ENCODE measurements at regions of chr1 and their contacts with region 1.

Region 1: GRCh38 chr1:212608209-212608955 is at the start of gene ATF3:
- DNase-seq: peak; percentile 99
- H3K4me3 Mint-ChIP-seq: peak within 1 kb of the TSS; percentile 82
- H3K27ac Mint-ChIP-seq: peak within 1 kb of the TSS; percentile 95
- H3K4me1 Mint-ChIP-seq: peaks cover 36% of the 10 kb centered on the region
- H3K27me3 Mint-ChIP-seq: peaks cover 65% of the 10 kb centered on the region
- CTCF ChIP-seq: no peak
- total RNA-seq, gene ATF3: 11.1 and 13.0 TPM in 2 replicates

Region 2: DNA sequence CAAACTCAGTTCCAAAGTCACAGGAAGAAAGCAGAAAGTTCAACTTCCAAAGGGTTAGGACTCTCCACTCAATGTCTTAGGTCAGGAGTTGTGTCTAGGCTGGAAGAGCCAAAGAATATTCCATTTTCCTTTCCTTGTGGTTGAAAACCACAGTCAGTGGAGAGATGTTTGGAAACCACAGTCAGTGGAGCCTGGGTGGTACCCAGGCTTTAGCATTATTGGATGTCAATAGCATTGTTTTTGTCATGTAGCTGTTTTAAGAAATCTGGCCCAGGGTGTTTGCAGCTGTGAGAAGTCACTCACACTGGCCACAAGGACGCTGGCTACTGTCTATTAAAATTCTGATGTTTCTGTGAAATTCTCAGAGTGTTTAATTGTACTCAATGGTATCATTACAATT is 11.9 kb after region 1 on chr1:
- CTCF ChIA-PET with region 1: interaction called, 10 read pairs
- intact Hi-C with region 1: no loop called
- DNase-seq: no peak
- H3K4me3 Mint-ChIP-seq: no peak overlapping the region
- H3K27ac Mint-ChIP-seq: peak overlapping the region; percentile 19
- H3K4me1 Mint-ChIP-seq: no peaks in the 10 kb centered on the region
- H3K27me3 Mint-ChIP-seq: no peaks in the 10 kb centered on the region
- CTCF ChIP-seq: no peak

Region 3: GRCh38 chr1:212721388-212722247 is 113.2 kb after region 1 on chr1:
- CTCF ChIA-PET with region 1: interaction called, 13 read pairs
- intact Hi-C with region 1: no loop called
- DNase-seq: peak; percentile 58
- H3K4me3 Mint-ChIP-seq: peak overlapping the region; percentile 45
- H3K27ac Mint-ChIP-seq: no peak overlapping the region
- H3K4me1 Mint-ChIP-seq: peaks cover 24% of the 10 kb centered on the region
- H3K27me3 Mint-ChIP-seq: peaks cover 23% of the 10 kb centered on the region
- CTCF ChIP-seq: no peak